ENCODE measurements at regions of chr4 and their contacts with region 1.

Region 1: GRCh38 chr4:6668381-6668780 is 25.3 kb upstream of the S100P start:
- DNase-seq: no peak
- H3K4me3 ChIP-seq: no peak overlapping the region
- H3K27ac ChIP-seq: no peak overlapping the region
- H3K4me1 ChIP-seq: no peaks in the 10 kb centered on the region
- H3K27me3 ChIP-seq: no peaks in the 10 kb centered on the region
- CTCF ChIP-seq: no peak
- POLR2A ChIP-seq: no peak

Region 2: GRCh38 chr4:6019316-6020263 is 648.8 kb before region 1 on chr4:
- intact Hi-C with region 1: loop called (anchors 5 kb)
- DNase-seq: no peak
- H3K4me3 ChIP-seq: no peak overlapping the region
- H3K27ac ChIP-seq: no peak overlapping the region
- H3K4me1 ChIP-seq: no peaks in the 10 kb centered on the region
- H3K27me3 ChIP-seq: peaks cover 0 to 7% of the 10 kb centered on the region in 2 donors
- CTCF ChIP-seq: peak; percentile 23 to 57 (median 51)
- POLR2A ChIP-seq: no peak

Region 3: DNA sequence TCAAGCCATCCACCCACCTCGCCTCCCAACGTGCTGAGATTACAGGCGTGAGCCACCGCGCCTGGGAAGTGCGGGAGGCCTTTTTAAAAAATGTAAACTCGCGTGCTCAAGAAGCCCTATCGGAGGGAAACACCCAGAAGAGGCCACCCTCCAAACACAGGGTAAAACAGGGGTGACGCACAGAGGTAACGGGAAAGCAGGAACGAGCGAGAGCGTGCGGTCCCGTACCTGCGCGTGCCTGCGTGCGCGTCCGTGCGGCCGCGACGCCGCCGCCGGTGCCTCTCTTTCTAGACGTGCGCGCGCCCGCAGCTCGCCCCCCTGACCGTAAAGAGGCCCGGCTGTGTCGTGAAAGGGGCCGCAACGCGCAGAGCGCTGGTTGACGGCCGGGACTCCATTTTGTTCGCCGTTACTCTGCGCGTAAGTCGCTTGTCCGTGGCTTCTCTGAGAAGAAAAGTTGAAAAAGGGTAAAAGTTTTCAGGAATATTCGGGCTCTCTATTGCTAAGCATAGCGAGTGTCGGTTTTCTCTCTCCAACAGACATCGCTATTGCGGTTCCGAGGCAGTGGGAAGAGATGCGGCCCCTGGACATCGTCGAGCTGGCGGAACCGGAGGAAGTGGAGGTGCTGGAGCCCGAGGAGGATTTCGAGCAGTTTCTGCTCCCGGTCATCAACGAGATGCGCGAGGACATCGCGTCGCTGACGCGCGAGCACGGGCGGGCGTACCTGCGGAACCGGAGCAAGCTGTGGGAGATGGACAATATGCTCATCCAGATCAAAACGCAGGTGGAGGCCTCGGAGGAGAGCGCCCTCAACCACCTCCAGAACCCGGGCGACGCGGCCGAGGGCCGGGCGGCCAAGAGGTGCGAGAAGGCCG is 27.9 kb before region 1 on chr4 and contains the start of gene MRFAP1:
- intact Hi-C with region 1: no loop called
- DNase-seq: peak; percentile 92
- H3K4me3 ChIP-seq: peak within 1 kb of the TSS; percentile 76 to 86 (median 81)
- H3K27ac ChIP-seq: peak within 1 kb of the TSS; percentile 94 to 97
- H3K4me1 ChIP-seq: peaks cover 3 to 9% of the 10 kb centered on the region in 2 donors
- H3K27me3 ChIP-seq: no peaks in the 10 kb centered on the region
- CTCF ChIP-seq: no peak
- POLR2A ChIP-seq: peak; percentile 92
- total RNA-seq, gene MRFAP1: 119 to 172 (median 142) TPM

Region 4: DNA sequence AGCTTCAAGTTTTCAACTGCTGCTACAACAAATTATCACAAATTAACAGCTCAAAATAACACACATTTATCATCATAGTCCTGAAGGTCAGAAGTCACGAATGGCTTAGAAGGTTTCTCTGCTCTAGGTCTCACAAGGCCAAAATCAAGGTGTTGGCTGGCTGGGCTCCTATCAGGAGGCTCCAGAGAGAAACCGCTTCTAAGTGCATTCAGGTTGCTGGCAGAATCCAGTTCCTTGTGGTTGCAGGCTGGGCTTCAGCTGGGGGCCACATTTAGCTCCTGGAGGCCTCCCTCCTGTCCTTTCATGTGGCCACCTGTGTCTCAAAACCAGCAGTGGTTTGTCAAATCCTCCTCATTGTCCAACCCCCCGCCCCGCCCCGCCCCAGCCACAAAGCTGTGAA is 12.5 kb before region 1 on chr4:
- intact Hi-C with region 1: no loop called
- DNase-seq: no peak
- H3K4me3 ChIP-seq: no peak overlapping the region
- H3K27ac ChIP-seq: no peak overlapping the region
- H3K4me1 ChIP-seq: no peaks in the 10 kb centered on the region
- H3K27me3 ChIP-seq: no peaks in the 10 kb centered on the region
- CTCF ChIP-seq: no peak
- POLR2A ChIP-seq: no peak

Region 5: DNA sequence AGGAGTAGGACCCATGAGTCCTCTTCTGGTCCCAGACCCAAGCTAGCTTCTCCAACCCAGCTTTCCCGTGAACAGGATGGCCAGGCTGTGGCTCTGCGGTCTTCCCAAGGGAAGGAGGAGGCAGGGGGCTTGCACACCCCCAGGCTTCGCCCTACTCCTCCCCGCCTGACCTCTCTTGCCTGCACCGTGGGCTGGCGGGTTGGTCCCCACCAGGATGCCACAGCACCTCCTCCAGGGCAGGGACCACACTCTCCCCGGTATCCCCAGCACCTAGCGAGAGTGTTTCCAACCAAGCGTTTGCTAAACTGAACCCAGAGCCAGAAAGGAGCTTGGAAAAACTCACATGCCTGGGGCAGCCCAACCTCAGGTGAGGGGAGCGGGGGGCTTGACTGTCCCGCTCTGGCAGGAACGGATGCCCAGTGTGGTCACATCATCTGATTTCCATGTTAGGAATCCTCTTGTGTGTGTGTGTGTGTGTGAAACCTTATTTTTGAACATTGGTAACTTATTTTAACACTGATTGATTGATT is 16.3 kb after region 1 on chr4:
- intact Hi-C with region 1: loop called (anchors 1 kb)
- DNase-seq: no peak
- H3K4me3 ChIP-seq: no peak overlapping the region
- H3K27ac ChIP-seq: no peak overlapping the region
- H3K4me1 ChIP-seq: peaks cover 6 to 9% of the 10 kb centered on the region in 2 donors
- H3K27me3 ChIP-seq: no peaks in the 10 kb centered on the region
- CTCF ChIP-seq: no peak
- POLR2A ChIP-seq: no peak